ENCODE measurements at regions of chr2 and their contacts with region 1.

Region 1: GRCh38 chr2:30146438-30147147 is at the start of gene YPEL5:
- DNase-seq: peak; percentile 98
- ATAC-seq: peak; percentile 85
- H3K4me3 Mint-ChIP-seq: peak within 1 kb of the TSS; percentile 86
- H3K27ac Mint-ChIP-seq: peak within 1 kb of the TSS; percentile 99
- H3K4me1 Mint-ChIP-seq: peaks cover 50% of the 10 kb centered on the region
- H3K27me3 Mint-ChIP-seq: no peaks in the 10 kb centered on the region
- CTCF ChIP-seq: no peak
- total RNA-seq, gene YPEL5: 56.7 and 57.4 TPM in 2 replicates

Region 2: GRCh38 chr2:28894470-28895177 is 1252.0 kb before region 1 on chr2 and contains the start of gene WDR43:
- CTCF ChIA-PET with region 1: no interaction called
- POLR2A ChIA-PET with region 1: no interaction called
- intact Hi-C with region 1: loop called (anchors 10 kb)
- DNase-seq: peak; percentile 99
- ATAC-seq: peak; percentile 99
- H3K4me3 Mint-ChIP-seq: peak within 1 kb of the TSS; percentile 99
- H3K27ac Mint-ChIP-seq: peak within 1 kb of the TSS; percentile 87
- H3K4me1 Mint-ChIP-seq: peaks cover 44% of the 10 kb centered on the region
- H3K27me3 Mint-ChIP-seq: no peaks in the 10 kb centered on the region
- CTCF ChIP-seq: no peak
- total RNA-seq, gene WDR43: 86.6 and 98.8 TPM in 2 replicates

Region 3: DNA sequence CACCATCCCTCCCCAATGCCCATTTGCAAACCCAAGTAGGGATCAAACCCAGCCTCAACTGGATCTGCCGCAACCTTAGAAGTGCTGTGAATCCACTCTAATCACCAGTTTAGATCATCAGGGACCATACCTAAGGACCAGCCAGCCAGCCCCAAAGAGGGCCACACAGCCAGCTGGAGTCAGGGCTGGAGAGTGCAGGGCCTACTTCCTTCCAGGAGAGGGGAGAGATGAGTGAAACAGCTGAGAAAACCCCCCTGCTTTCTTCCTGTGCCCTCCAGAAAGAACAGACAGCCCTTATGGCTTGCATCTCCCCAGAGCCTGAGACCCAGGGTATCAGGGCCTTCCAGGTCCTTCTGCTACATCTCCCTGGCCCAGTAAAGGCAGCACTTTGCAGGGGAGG is 26.0 kb after region 1 on chr2:
- CTCF ChIA-PET with region 1: no interaction called
- POLR2A ChIA-PET with region 1: no interaction called
- intact Hi-C with region 1: no loop called
- DNase-seq: no peak
- ATAC-seq: no peak
- H3K4me3 Mint-ChIP-seq: no peak overlapping the region
- H3K27ac Mint-ChIP-seq: no peak overlapping the region
- H3K4me1 Mint-ChIP-seq: no peaks in the 10 kb centered on the region
- H3K27me3 Mint-ChIP-seq: no peaks in the 10 kb centered on the region
- CTCF ChIP-seq: no peak

Region 4: GRCh38 chr2:30225131-30225762 is 78.7 kb after region 1 on chr2:
- CTCF ChIA-PET with region 1: interaction called, 3 read pairs
- POLR2A ChIA-PET with region 1: interaction called, 59 read pairs
- intact Hi-C with region 1: loop called (anchors 1 kb)
- DNase-seq: no peak
- ATAC-seq: peak; percentile 64
- H3K4me3 Mint-ChIP-seq: peak overlapping the region; percentile 90
- H3K27ac Mint-ChIP-seq: peak overlapping the region; percentile 99
- H3K4me1 Mint-ChIP-seq: peaks cover 63% of the 10 kb centered on the region
- H3K27me3 Mint-ChIP-seq: no peaks in the 10 kb centered on the region
- CTCF ChIP-seq: no peak

Region 5: GRCh38 chr2:30436859-30437435 is 290.4 kb after region 1 on chr2:
- CTCF ChIA-PET with region 1: no interaction called
- POLR2A ChIA-PET with region 1: no interaction called
- intact Hi-C with region 1: loop called (anchors 2 kb)
- DNase-seq: peak; percentile 20
- ATAC-seq: peak; percentile 89
- H3K4me3 Mint-ChIP-seq: peak overlapping the region; percentile 65
- H3K27ac Mint-ChIP-seq: peak overlapping the region; percentile 90
- H3K4me1 Mint-ChIP-seq: peaks cover 44% of the 10 kb centered on the region
- H3K27me3 Mint-ChIP-seq: no peaks in the 10 kb centered on the region
- CTCF ChIP-seq: no peak

Region 6: DNA sequence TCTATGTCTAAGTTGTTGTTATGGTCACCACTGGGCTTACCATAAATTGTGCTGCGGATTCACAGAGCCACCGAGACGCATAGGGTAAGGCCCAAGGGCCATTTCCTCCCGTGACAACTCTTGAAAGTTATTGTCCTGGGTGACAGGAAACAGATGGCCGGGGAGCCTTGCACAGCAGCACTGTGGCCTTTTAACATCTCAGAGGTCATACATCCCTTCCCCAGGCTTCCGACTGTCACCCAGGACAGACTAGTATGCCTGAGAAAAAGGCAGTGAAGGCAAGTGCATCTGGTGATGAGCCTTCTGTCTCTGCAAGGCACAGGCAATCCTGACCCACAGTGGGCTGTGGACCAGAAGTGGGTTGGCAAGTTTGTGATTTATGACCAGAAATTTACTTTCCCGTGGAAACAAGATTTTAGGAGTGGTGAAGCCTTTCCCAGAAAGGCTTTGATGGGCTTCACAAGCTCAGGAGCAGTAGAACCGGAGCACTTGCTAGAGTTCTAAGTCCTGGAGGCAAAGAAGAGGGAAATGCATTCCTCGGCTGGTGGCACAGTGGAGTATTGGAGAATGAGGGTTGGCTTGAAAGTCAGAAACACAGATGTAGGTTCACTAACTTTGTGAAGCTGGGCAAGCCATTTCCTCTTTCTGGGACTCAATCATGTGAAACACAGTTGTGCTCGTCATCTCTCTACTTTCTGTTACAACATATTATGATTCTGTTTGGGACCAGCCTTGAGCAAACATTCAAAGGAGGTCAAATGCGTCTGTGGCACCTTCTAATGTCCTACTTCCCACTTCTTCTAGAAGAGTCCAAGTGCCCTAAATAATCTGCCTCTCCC is 1072.8 kb after region 1 on chr2:
- CTCF ChIA-PET with region 1: no interaction called
- POLR2A ChIA-PET with region 1: interaction called, 4 read pairs
- intact Hi-C with region 1: loop called (anchors 1 kb)
- DNase-seq: peak; percentile 41
- ATAC-seq: peak; percentile 81
- H3K4me3 Mint-ChIP-seq: peak overlapping the region; percentile 79
- H3K27ac Mint-ChIP-seq: peak overlapping the region; percentile 99
- H3K4me1 Mint-ChIP-seq: peaks cover 97% of the 10 kb centered on the region
- H3K27me3 Mint-ChIP-seq: no peaks in the 10 kb centered on the region
- CTCF ChIP-seq: no peak

Region 7: GRCh38 chr2:31318361-31319336 is 1172.1 kb after region 1 on chr2:
- CTCF ChIA-PET with region 1: no interaction called
- POLR2A ChIA-PET with region 1: interaction called, 6 read pairs
- intact Hi-C with region 1: loop called (anchors 2 kb)
- DNase-seq: peak; percentile 60
- ATAC-seq: peak; percentile 97
- H3K4me3 Mint-ChIP-seq: peak overlapping the region; percentile 66
- H3K27ac Mint-ChIP-seq: peak overlapping the region; percentile 83
- H3K4me1 Mint-ChIP-seq: peaks cover 51% of the 10 kb centered on the region
- H3K27me3 Mint-ChIP-seq: no peaks in the 10 kb centered on the region
- CTCF ChIP-seq: no peak

Measured in activated B cell treated with CpG ODN at 0.5 μM for 24 hours (primary cell).